Right lobe of liver (tissue), 6 donors: ENCODE measurements at regions of chr1 and their contacts with region 1.

Region 1: GRCh38 chr1:19390901-19391595 is 78.9 kb downstream of the SLC66A1 start:
- DNase-seq: peak in 1 of 3 donors; percentile 40
- ATAC-seq: peak; percentile 37 to 56 (median 44)
- H3K4me3 ChIP-seq: no peak overlapping the region
- H3K27ac ChIP-seq: peak overlapping the region in 2 of 3 donors; percentile 0 to 33
- H3K4me1 ChIP-seq: peaks cover 0 to 17% (median 4%) of the 10 kb centered on the region in 4 donors
- H3K27me3 ChIP-seq: no peaks in the 10 kb centered on the region
- CTCF ChIP-seq: peak; percentile 64 to 83 (median 79)
- POLR2A ChIP-seq: no peak

Region 2: GRCh38 chr1:19450811-19451515 is 59.9 kb after region 1 on chr1:
- intact Hi-C with region 1: loop called in 1 of 2 experiments (anchors 5 kb)
- DNase-seq: no peak
- ATAC-seq: peak; percentile 4 to 60 (median 18)
- H3K4me3 ChIP-seq: no peak overlapping the region
- H3K27ac ChIP-seq: peak overlapping the region in 1 of 3 donors; percentile 35
- H3K4me1 ChIP-seq: peaks cover 0 to 33% (median 0%) of the 10 kb centered on the region in 4 donors
- H3K27me3 ChIP-seq: no peaks in the 10 kb centered on the region
- CTCF ChIP-seq: no peak
- POLR2A ChIP-seq: no peak

Region 3: DNA sequence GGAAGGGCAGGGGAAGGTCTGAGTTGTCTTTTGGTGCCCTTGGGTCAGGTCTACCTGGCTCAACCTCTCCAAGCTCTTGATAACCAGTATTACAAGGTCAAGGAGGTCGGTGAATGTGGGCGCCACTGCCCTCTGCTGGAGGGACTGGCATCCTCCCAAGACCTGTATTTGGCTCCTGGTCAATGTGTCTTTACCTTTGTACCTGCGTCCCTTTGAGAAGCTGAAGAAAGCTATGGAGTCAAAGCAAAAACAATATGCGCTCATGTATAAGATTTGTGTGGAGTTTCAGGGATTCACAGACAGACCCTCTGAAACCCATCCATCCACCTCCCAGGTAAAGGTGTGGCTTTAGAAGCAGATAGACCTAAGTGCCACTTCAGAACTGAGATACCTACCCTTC is 191.3 kb after region 1 on chr1:
- intact Hi-C with region 1: loop called in 1 of 2 experiments (anchors 10 kb)
- DNase-seq: peak in 2 of 3 donors; percentile 30 to 52
- ATAC-seq: peak; percentile 57 to 72 (median 62)
- H3K4me3 ChIP-seq: no peak overlapping the region
- H3K27ac ChIP-seq: no peak overlapping the region
- H3K4me1 ChIP-seq: no peaks in the 10 kb centered on the region
- H3K27me3 ChIP-seq: no peaks in the 10 kb centered on the region
- CTCF ChIP-seq: peak; percentile 41 to 67 (median 54)
- POLR2A ChIP-seq: no peak